ENCODE measurements at regions of chr11 and their contacts with region 1.

Region 1: GRCh38 chr11:39374963-39375698 is 2084.3 kb downstream of the LRRC4C start:
- DNase-seq: no peak
- H3K4me3 ChIP-seq: no peak overlapping the region
- H3K27ac ChIP-seq: no peak overlapping the region
- H3K4me1 ChIP-seq: no peaks in the 10 kb centered on the region
- H3K27me3 ChIP-seq: no peaks in the 10 kb centered on the region
- CTCF ChIP-seq: peak; percentile 24 to 56 (median 40)
- EP300 ChIP-seq: no peak
- POLR2A ChIP-seq: no peak

Region 2: GRCh38 chr11:40293655-40294348 is 918.7 kb after region 1 on chr11:
- intact Hi-C with region 1: loop called (anchors 10 kb)
- DNase-seq: no peak
- H3K4me3 ChIP-seq: peak overlapping the region; percentile 57 to 73 (median 59)
- H3K27ac ChIP-seq: peak overlapping the region; percentile 57 to 78 (median 71)
- H3K4me1 ChIP-seq: peaks cover 6 to 15% (median 13%) of the 10 kb centered on the region in 4 donors
- H3K27me3 ChIP-seq: peaks cover 0 to 42% (median 2%) of the 10 kb centered on the region in 4 donors
- CTCF ChIP-seq: peak; percentile 80 to 92 (median 85)
- EP300 ChIP-seq: no peak
- POLR2A ChIP-seq: no peak